ENCODE measurements at regions of chr6 and their contacts with region 1.

Region 1: DNA sequence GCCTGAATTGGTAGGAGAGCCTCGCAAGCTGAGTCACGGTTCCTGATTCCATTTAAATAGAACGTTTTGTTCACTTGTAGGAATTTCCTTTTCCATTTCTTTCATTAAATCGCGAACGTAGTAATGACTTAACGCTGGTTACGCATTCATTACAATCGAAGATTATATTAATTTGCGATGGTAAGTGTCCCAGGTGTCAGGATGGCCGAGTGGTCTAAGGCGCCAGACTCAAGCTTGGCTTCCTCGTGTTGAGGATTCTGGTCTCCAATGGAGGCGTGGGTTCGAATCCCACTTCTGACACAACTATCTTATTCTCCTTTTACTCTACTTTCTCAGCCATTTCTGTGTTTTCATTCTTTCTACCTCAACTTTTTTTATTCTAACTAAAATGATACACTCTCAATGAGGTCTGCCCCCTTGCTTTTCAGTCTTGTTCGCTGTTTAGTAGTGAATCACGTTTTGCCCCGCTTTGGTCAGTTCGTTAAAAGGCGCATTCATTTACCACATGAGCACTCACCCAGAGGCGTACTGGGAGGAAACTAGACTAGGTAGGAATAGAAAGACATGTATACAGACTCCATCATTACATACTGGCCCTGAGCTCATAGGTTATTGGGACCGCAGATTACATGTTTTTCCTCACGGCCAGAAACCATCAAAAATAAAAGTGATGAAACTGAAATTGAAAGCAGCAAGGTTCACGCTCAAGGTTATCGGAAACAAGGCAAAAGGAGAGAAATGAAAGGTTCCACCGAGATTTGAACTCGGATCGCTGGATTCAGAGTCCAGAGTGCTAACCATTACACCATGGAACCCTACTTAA is 17.3 kb upstream of the TRIM27 start:
- DNase-seq: peak; percentile 49 to 93 (median 67)
- ATAC-seq: peak; percentile 68
- H3K4me3 ChIP-seq: peak overlapping the region; percentile 66
- H3K4me3 Mint-ChIP-seq: peak overlapping the region; percentile 92
- H3K27ac ChIP-seq: peak overlapping the region; percentile 55 to 63
- H3K27ac Mint-ChIP-seq: peak overlapping the region; percentile 92
- H3K4me1 ChIP-seq: peaks cover 42% of the 10 kb centered on the region
- H3K4me1 Mint-ChIP-seq: peaks cover 55% of the 10 kb centered on the region
- H3K27me3 ChIP-seq: no peaks in the 10 kb centered on the region
- H3K27me3 Mint-ChIP-seq: peaks cover 21% of the 10 kb centered on the region
- CTCF ChIP-seq: no peak

Region 2: GRCh38 chr6:28880894-28881780 is 59.9 kb before region 1 on chr6:
- CTCF ChIA-PET with region 1: no interaction called
- POLR2A ChIA-PET with region 1: interaction called, 11 read pairs
- intact Hi-C with region 1: no loop called
- DNase-seq: peak in 13 of 14 experiments; percentile 27 to 71 (median 43)
- ATAC-seq: no peak
- H3K4me3 ChIP-seq: peak overlapping the region; percentile 39
- H3K4me3 Mint-ChIP-seq: peak overlapping the region; percentile 77
- H3K27ac ChIP-seq: no peak overlapping the region
- H3K27ac Mint-ChIP-seq: peak overlapping the region; percentile 81
- H3K4me1 ChIP-seq: peaks cover 24% of the 10 kb centered on the region
- H3K4me1 Mint-ChIP-seq: peaks cover 39% of the 10 kb centered on the region
- H3K27me3 ChIP-seq: no peaks in the 10 kb centered on the region
- H3K27me3 Mint-ChIP-seq: peaks cover 7% of the 10 kb centered on the region
- CTCF ChIP-seq: no peak

Region 3: GRCh38 chr6:28923318-28924102 is 17.6 kb before region 1 on chr6 and contains the start of gene TRIM27:
- CTCF ChIA-PET with region 1: interaction called, 3 read pairs
- POLR2A ChIA-PET with region 1: interaction called, 48 read pairs
- intact Hi-C with region 1: loop called (anchors 1 to 2 kb)
- DNase-seq: peak; percentile 58 to 90 (median 74)
- ATAC-seq: peak; percentile 78
- H3K4me3 ChIP-seq: peak within 1 kb of the TSS; percentile 98
- H3K4me3 Mint-ChIP-seq: peak within 1 kb of the TSS; percentile 95
- H3K27ac ChIP-seq: peak within 1 kb of the TSS; percentile 67 to 80
- H3K27ac Mint-ChIP-seq: peak within 1 kb of the TSS; percentile 89
- H3K4me1 ChIP-seq: peaks cover 44% of the 10 kb centered on the region
- H3K4me1 Mint-ChIP-seq: peaks cover 42% of the 10 kb centered on the region
- H3K27me3 ChIP-seq: no peaks in the 10 kb centered on the region
- H3K27me3 Mint-ChIP-seq: no peaks in the 10 kb centered on the region
- CTCF ChIP-seq: no peak
- total RNA-seq, gene TRIM27: 11.5 to 13.2 TPM

Region 4: GRCh38 chr6:28981833-28982475 is 40.9 kb after region 1 on chr6:
- CTCF ChIA-PET with region 1: interaction called, 5 read pairs
- POLR2A ChIA-PET with region 1: interaction called, 12 read pairs
- intact Hi-C with region 1: loop called (anchors 1 to 2 kb)
- DNase-seq: peak; percentile 46 to 91 (median 64)
- ATAC-seq: peak; percentile 62
- H3K4me3 ChIP-seq: peak overlapping the region; percentile 88
- H3K4me3 Mint-ChIP-seq: peak overlapping the region; percentile 95
- H3K27ac ChIP-seq: no peak overlapping the region
- H3K27ac Mint-ChIP-seq: peak overlapping the region; percentile 98
- H3K4me1 ChIP-seq: peaks cover 28% of the 10 kb centered on the region
- H3K4me1 Mint-ChIP-seq: peaks cover 82% of the 10 kb centered on the region
- H3K27me3 ChIP-seq: peaks cover 0 to 15% of the 10 kb centered on the region in 2 experiments
- H3K27me3 Mint-ChIP-seq: peaks cover 64% of the 10 kb centered on the region
- CTCF ChIP-seq: no peak

Region 5: DNA sequence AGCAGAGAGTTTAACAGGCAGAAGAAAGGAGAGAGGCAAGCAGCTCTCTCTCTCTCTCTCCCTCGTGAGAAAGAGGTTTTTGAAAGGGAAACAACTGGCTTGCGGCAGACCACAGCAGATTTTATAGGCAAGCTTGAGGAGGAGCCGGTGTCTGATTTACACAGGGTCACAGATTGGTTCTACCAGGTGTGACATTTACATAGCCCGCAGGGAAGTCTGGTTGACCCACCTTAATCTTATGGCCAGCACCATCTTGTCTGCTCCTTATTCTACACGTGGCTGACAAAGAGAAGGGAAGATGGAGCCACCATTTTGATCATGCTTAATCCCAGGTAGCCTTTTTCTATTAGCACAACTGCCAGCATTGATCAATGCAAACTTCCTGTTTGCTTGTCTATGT is 295.0 kb after region 1 on chr6:
- CTCF ChIA-PET with region 1: no interaction called
- POLR2A ChIA-PET with region 1: no interaction called
- intact Hi-C with region 1: no loop called
- DNase-seq: no peak
- ATAC-seq: no peak
- H3K4me3 ChIP-seq: no peak overlapping the region
- H3K4me3 Mint-ChIP-seq: no peak overlapping the region
- H3K27ac ChIP-seq: no peak overlapping the region
- H3K27ac Mint-ChIP-seq: no peak overlapping the region
- H3K4me1 ChIP-seq: no peaks in the 10 kb centered on the region
- H3K4me1 Mint-ChIP-seq: no peaks in the 10 kb centered on the region
- H3K27me3 ChIP-seq: peaks cover 0 to 4% of the 10 kb centered on the region in 2 experiments
- H3K27me3 Mint-ChIP-seq: peaks cover 45% of the 10 kb centered on the region
- CTCF ChIP-seq: no peak